ENCODE measurements at regions of chr3 and their contacts with region 1.

Region 1: DNA sequence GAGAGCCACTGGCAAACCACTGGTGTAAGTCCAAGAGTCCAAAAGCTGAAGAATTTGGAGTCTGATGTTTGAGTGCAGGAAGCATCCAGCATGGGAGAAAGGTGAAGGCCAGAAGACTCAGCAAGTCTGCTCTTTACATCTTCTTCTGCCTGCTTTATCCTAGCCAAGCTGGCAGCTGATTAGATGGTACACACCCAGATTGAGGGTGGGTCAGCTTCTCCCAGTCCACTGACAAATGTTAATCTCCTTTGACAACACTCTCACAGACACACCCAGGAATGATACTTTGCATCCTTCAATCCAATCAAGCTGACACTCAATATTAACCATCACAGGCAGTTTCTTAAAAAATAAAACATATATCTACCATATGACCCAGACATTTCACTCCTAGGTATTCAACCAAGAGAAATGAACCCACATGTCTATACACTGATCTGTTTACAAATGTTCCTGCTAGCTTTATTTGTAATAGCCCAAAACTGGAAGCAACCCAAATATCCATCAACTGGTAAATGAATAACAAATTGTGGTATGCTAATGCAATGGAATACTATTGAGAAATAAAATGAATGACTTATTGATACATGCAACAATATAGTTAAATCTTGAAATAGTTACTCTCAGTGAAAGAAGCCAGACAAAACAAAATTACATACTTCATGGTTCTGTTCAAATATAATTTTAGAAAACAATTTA is 373.8 kb downstream of the ZNF385D start:
- DNase-seq: no peak

Region 2: GRCh38 chr3:21330293-21330692 is 46.9 kb before region 1 on chr3:
- intact Hi-C with region 1: no loop called
- DNase-seq: no peak

Region 3: DNA sequence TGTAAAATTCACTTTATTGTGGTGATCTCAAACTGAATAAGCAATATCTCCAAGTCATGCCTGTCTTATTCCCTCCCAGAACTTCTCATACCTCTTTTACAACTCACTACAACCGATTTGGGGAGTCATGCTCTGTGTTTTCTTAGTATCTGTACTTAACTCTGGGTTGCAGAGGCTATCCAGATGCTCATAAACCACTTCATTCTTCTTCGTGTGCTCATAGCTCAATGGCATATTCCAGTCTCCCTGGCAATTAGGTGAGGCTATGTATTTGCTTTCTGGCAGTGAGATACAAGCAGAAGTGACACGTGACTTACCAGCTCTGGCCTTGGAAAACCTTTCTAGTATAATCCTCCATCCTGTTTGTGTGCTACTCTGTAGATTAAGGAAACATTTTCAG is 12.9 kb after region 1 on chr3:
- intact Hi-C with region 1: no loop called
- DNase-seq: no peak

Region 4: GRCh38 chr3:21425715-21426114 is 48.5 kb after region 1 on chr3:
- intact Hi-C with region 1: loop called in 1 of 2 experiments (anchors 2 kb)
- DNase-seq: no peak

Measured in posterior vena cava (tissue), 2 donors.